ENCODE measurements at regions of chr10 and their contacts with region 1.

Region 1: GRCh38 chr10:59625721-59626522 is 83.7 kb downstream of the SLC16A9 start:
- DNase-seq: peak in 37 of 42 donors; percentile 18 to 84 (median 59)

Region 2: DNA sequence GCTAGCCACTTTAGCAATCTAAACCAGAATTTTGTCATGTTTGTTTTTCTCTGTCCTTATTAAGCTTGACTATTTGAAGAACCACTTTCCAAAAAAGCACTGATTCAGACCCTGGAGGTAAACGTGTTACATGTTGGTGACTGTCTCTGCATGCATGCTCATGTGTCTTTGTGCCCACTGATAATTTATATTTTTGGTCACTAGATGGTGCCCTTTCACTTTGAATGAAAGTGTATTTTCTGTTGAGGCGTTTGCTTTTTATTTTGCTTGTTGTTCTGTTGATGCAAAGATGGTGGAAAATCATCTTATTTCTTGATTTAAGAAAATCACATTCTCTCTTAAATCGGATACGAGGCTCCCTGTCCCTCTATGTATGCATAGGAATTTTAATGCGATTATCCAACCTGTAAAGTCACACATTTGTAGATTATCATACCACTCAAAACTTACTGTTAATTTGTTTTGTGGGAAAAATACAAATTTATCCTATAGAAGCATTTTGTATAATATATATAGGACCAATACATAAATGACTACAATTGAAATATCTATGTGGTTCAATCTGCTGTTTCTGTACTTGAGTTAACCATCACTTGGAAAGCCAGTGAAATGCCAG is 843.9 kb before region 1 on chr10:
- intact Hi-C with region 1: loop called (anchors 5 kb)
- DNase-seq: peak in 9 of 42 donors; percentile 7 to 68 (median 16)

Region 3: GRCh38 chr10:58952747-58953466 is 673.0 kb before region 1 on chr10:
- intact Hi-C with region 1: loop called (anchors 5 kb)
- DNase-seq: peak in 34 of 42 donors; percentile 31 to 93 (median 69)

Region 4: DNA sequence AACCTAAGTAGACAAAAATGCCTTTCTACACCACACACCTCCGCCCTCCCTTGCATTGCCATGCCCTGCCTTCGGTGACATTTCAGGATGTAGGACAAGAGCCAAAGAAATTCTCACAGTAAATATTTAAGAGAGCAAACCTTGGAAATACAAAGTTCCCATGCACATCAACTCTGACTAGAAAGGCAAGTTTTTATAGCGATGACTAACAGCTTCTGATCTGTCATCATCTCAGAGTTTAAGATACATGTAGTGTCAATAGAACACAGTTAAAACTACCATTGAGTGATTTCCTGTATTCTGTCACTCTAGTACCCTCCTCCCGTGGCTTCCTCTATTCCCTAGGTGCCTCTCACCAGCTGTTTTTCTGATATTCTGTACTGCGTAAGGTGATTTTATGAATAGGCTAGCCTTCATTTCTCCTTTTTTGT is 63.0 kb after region 1 on chr10:
- intact Hi-C with region 1: no loop called
- DNase-seq: no peak

Region 5: GRCh38 chr10:59906417-59907202 is 280.7 kb after region 1 on chr10 and contains the start of gene CCDC6:
- intact Hi-C with region 1: loop called (anchors 5 kb)
- DNase-seq: peak; percentile 84 to 97 (median 94)

Region 6: DNA sequence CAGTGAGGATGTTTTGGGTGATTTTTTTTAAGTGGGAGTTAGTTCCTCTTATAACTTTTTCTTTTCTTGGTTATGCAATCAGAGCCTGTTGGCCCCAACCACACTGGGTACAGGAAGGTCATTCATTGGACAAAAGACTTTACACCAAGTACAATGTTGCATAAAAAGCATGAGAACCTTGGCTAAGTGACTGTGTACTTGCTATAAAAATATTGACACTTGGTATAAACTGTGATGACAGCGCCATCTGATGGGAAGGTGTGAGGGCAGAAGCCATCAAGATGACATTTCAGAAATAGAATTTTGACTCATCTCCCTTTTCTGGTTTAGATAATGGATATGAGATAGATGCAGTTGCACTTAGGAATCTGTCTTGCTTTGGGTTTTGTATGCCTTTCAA is 406.8 kb after region 1 on chr10:
- intact Hi-C with region 1: loop called (anchors 10 kb)
- DNase-seq: peak in 31 of 42 donors; percentile 30 to 78 (median 45)